K562 (cell line): ENCODE measurements at regions of chr3 and their contacts with region 1.

Region 1: GRCh38 chr3:43286115-43286840 is at the start of gene SNRK:
- DNase-seq: peak; percentile 89 to 100 (median 99)
- ATAC-seq: peak; percentile 93
- H3K4me3 ChIP-seq: peak within 1 kb of the TSS; percentile 68
- H3K27ac ChIP-seq: peak within 1 kb of the TSS; percentile 65; the same call in 2 of the 3 replicates
- H3K4me1 ChIP-seq: peaks cover 12% of the 10 kb centered on the region in 2 experiments; a peak in 4 of 5 replicates
- H3K27me3 ChIP-seq: no peaks in the 10 kb centered on the region
- CTCF ChIP-seq: peak in 2 of 3 experiments; percentile 22 to 46; a peak in 3 of 6 replicates
- EP300 ChIP-seq: no peak
- POLR2A ChIP-seq: peak; percentile 63
- RAD21 ChIP-seq: peak; percentile 24 to 42; a peak in 2 of 4 replicates
- polyA plus RNA-seq, gene SNRK: 1.7 to 2.0 TPM

Region 2: DNA sequence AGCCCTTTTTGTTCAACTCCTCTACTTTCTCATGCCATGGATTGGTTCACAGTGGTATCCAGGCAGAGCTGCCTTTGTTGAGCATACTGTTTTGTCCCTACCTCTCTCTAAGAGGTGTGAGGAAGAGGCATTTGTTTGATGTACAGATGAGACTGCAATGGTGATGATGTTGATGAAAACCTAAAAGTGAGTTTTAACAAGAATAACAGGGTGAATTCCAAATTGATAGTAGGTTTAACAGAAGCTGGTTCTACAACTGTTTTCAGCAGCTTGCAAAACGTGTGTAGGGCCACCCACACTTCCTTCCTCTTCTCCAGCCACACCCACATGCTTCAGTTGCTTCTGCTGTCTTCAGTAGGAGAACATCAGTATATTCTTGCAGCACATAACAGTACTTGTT is 10.3 kb after region 1 on chr3:
- CTCF ChIA-PET with region 1: interaction called, 3 read pairs
- POLR2A ChIA-PET with region 1: interaction called, 10 read pairs
- in situ Hi-C with region 1: no loop called
- intact Hi-C with region 1: no loop called
- DNase-seq: peak in 3 of 4 experiments; percentile 5 to 37 (median 13)
- ATAC-seq: peak; percentile 83
- H3K4me3 ChIP-seq: no peak overlapping the region
- H3K27ac ChIP-seq: no peak overlapping the region
- H3K4me1 ChIP-seq: peaks cover 0 to 6% of the 10 kb centered on the region in 2 experiments; a peak in 2 of 5 replicates
- H3K27me3 ChIP-seq: no peaks in the 10 kb centered on the region
- CTCF ChIP-seq: no peak
- EP300 ChIP-seq: no peak
- POLR2A ChIP-seq: no peak
- RAD21 ChIP-seq: no peak